GM10248 (cell line): ENCODE measurements at regions of chr10 and their contacts with region 1.

Region 1: DNA sequence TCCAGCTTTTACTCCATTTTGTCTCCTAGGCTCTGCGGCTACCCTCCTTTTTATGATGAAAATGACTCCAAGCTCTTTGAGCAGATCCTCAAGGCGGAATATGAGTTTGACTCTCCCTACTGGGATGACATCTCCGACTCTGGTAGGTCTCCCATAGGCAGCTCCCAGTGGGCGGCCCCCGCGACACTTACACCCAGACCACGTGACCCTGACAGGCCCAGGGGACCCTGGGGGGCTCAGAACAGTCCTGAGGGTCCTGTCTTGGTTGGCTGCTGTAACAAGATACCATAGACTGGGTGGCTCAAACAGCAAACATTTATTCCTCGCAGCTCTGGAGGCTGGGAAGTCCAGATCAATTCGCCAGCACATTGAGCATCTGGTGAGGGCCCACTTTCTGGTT is 187.3 kb downstream of the CCDC3 start:
- DNase-seq: no peak
- CTCF ChIP-seq: no peak

Region 2: GRCh38 chr10:12782537-12782936 is 31.6 kb before region 1 on chr10:
- CTCF ChIA-PET with region 1: interaction called, 12 read pairs
- POLR2A ChIA-PET with region 1: no interaction called
- DNase-seq: peak; percentile 53
- CTCF ChIP-seq: peak; percentile 44

Region 3: DNA sequence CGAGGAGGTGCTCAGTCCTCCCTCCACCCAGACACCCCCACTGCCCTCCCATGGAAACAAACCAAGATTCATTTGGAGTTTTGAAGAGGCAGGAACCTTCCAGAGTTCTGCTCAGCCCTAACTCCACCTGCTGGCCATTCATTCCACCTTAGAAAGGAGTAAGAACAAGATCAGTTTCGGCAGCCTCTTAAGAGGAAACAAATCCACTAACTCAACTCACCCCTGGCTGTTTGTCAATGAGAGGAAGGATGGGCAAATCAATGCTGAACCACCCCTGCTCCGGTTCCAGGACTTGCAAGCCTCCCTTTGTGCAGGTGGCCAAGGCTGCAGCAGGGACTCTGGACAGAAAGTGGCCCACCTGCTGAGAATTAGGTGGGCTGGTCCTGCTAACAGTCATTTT is 161.1 kb after region 1 on chr10:
- CTCF ChIA-PET with region 1: no interaction called
- POLR2A ChIA-PET with region 1: no interaction called
- DNase-seq: peak; percentile 23
- CTCF ChIP-seq: no peak